GM10248 (cell line): ENCODE measurements at regions of chr3 and their contacts with region 1.

Region 1: GRCh38 chr3:100720426-100720825 is 11.1 kb downstream of the TFG start:
- DNase-seq: no peak
- CTCF ChIP-seq: no peak

Region 2: DNA sequence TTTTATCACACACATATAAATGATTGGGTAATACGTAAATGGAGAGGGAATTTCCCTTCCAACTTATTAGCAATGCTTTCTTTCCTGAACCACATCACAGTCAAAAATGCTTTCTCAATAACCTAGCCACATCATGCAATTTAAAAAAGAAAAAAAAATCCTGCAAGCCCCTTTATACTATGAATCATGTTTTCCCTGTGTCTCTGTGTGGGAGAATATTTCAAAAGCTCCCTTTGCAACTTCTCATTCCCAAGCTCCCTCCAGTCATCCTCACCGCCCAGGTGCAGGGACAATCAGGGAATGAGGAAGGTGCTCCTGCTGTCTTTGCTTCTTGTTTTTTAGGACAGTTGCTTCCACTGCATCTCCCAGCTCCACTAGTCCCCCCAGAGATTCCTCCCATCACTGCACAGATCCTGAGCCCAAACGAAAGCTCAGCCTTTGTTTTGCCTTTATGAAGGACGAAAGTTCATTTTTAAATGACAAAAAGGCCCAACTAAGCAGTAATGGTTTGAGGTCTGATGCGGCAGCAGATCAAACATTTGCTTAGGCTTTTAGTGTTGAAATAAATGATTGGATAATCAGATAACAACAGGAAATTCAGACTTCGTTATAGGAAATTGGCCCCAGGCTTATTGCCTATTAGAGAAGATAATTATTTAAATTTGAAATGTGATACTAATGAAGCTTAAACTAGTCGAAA is 158.8 kb before region 1 on chr3:
- CTCF ChIA-PET with region 1: no interaction called
- POLR2A ChIA-PET with region 1: no interaction called
- DNase-seq: no peak
- CTCF ChIP-seq: no peak

Region 3: DNA sequence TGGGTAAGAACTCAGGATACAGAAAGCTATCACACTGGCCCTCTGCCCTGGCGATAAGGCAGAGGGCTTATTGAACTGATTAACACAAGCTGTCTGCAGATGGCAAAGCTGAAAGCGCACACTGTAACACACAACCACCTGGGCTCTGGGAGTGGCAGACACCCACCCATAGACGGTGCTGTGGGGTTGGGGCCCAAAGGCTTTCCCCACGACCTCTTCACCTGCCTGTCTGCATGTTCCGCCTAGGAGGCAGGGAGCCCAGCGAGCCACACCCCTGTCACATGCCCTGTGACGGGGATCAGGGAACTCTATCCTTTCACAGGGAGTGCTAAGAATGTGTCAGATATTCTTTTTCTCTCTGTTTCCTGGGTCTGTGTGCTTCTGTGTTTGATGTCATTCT is 23.3 kb before region 1 on chr3:
- CTCF ChIA-PET with region 1: no interaction called
- POLR2A ChIA-PET with region 1: no interaction called
- DNase-seq: no peak
- CTCF ChIP-seq: no peak

Region 4: GRCh38 chr3:100708967-100709841 is 11.2 kb before region 1 on chr3 and contains the start of gene TFG:
- CTCF ChIA-PET with region 1: interaction called, 11 read pairs
- POLR2A ChIA-PET with region 1: interaction called, 3 read pairs
- DNase-seq: peak; percentile 99
- CTCF ChIP-seq: no peak